OCI-LY7 (cell line): ENCODE measurements at regions of chr17 and their contacts with region 1.

Region 1: GRCh38 chr17:16945663-16946218 is 26.2 kb downstream of the TNFRSF13B start:
- DNase-seq: peak; percentile 23
- H3K4me3 ChIP-seq: no peak overlapping the region
- H3K27ac ChIP-seq: no peak overlapping the region
- H3K4me1 ChIP-seq: peaks cover 57% of the 10 kb centered on the region
- CTCF ChIP-seq: peak; percentile 57

Region 2: GRCh38 chr17:16973760-16974540 is 28.2 kb after region 1 on chr17:
- CTCF ChIA-PET with region 1: no interaction called
- POLR2A ChIA-PET with region 1: interaction called, 3 read pairs
- intact Hi-C with region 1: loop called (anchors 2 kb)
- DNase-seq: peak; percentile 54
- H3K4me3 ChIP-seq: peak overlapping the region; percentile 29
- H3K27ac ChIP-seq: peak overlapping the region; percentile 90
- H3K4me1 ChIP-seq: peaks cover 100% of the 10 kb centered on the region
- CTCF ChIP-seq: no peak